Psoas muscle (tissue), 8 donors: ENCODE measurements at regions of chr16 and their contacts with region 1.

Region 1: GRCh38 chr16:21001262-21001661 is 100.7 kb downstream of the LYRM1 start:
- DNase-seq: no peak
- ATAC-seq: no peak
- H3K4me3 ChIP-seq: no peak overlapping the region
- H3K27ac ChIP-seq: no peak overlapping the region
- H3K4me1 ChIP-seq: no peaks in the 10 kb centered on the region
- H3K27me3 ChIP-seq: no peaks in the 10 kb centered on the region
- CTCF ChIP-seq: peak; percentile 21

Region 2: DNA sequence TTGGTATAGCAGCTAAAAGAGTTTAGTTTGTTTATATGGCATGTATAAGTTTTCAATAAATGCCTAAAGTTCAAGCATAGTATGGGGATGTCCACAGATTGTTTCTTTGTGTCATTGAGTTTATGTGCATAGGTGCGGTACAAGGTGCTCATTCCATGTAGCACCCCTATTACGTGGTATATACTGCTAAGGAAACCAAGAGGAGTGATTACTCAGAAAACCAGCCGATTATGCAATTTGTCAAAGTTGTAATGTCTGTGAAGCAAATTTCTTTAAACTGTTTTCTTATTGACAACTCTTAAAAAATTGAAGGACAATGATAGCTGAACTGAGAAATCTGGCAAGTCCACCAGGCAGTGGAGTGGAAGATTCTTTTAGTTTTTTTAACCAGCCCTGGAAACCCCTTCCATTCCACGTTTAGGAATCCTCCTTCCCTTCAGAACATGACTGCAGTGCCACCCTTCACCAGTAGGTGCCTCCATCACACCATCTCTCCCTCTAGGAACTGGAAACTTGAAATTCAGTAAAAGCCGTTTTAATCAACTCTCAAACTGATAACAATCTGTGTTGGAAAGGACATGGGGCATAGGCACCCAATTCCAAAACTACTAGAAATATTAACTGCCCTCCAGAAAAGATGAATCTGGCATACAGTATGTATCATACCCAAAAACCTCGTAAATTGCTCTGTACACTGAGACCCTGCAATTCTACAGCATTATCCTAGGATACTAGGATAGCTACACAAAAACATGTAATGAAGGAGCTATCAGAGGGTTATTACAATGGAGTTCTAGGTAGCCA is 151.5 kb before region 1 on chr16:
- intact Hi-C with region 1: loop called in 1 of 2 experiments (anchors 10 kb)
- DNase-seq: peak; percentile 69 to 82
- ATAC-seq: peak; percentile 56 to 74 (median 68)
- H3K4me3 ChIP-seq: no peak overlapping the region
- H3K27ac ChIP-seq: no peak overlapping the region
- H3K4me1 ChIP-seq: peaks cover 15% of the 10 kb centered on the region
- H3K27me3 ChIP-seq: no peaks in the 10 kb centered on the region
- CTCF ChIP-seq: peak; percentile 99

Region 3: DNA sequence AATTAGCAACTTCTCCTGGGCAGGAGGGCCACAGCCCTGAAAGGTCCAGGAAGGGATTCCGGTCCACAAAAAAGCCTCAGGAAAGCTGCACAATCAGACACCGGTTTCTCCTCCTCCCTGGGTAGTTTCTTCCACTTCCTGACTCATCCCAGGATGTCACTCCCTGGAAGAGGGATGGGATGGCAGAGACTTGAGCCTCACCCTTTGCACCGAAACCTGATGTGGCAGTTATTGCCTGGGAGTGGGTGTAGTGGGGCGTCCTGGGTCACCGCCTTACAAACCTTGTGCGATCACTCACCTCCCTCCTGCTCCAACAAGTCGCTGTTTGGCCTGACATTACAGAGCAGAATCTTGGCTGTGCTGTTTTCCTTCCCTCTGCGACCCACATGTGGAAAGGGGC is 29.9 kb before region 1 on chr16:
- intact Hi-C with region 1: no loop called
- DNase-seq: no peak
- ATAC-seq: no peak
- H3K4me3 ChIP-seq: no peak overlapping the region
- H3K27ac ChIP-seq: no peak overlapping the region
- H3K4me1 ChIP-seq: no peaks in the 10 kb centered on the region
- H3K27me3 ChIP-seq: no peaks in the 10 kb centered on the region
- CTCF ChIP-seq: no peak

Region 4: DNA sequence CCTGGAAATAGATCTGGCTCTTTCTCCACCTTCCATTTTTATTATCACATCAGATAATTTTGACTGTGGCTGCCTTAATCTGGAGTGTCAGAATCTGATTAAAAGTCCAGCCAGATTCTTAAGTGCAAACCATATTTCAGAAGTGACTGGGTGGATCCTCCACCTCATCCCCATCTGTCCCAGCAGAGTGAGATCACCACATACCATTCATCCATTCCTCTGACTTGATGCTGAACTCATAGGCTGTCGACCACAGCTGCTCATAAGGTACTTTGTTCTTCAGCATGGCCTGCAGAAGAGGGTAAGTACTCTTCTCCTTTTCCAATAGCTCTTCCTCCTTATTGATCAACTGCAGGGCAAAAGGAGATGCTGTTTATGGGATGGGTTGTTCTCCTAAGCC is 95.9 kb after region 1 on chr16:
- intact Hi-C with region 1: loop called in 1 of 2 experiments (anchors 10 kb)
- DNase-seq: no peak
- ATAC-seq: no peak
- H3K4me3 ChIP-seq: no peak overlapping the region
- H3K27ac ChIP-seq: no peak overlapping the region
- H3K4me1 ChIP-seq: no peaks in the 10 kb centered on the region
- H3K27me3 ChIP-seq: no peaks in the 10 kb centered on the region
- CTCF ChIP-seq: no peak